WTC11 (cell line): ENCODE measurements at regions of chr15 and their contacts with region 1.

Region 1: DNA sequence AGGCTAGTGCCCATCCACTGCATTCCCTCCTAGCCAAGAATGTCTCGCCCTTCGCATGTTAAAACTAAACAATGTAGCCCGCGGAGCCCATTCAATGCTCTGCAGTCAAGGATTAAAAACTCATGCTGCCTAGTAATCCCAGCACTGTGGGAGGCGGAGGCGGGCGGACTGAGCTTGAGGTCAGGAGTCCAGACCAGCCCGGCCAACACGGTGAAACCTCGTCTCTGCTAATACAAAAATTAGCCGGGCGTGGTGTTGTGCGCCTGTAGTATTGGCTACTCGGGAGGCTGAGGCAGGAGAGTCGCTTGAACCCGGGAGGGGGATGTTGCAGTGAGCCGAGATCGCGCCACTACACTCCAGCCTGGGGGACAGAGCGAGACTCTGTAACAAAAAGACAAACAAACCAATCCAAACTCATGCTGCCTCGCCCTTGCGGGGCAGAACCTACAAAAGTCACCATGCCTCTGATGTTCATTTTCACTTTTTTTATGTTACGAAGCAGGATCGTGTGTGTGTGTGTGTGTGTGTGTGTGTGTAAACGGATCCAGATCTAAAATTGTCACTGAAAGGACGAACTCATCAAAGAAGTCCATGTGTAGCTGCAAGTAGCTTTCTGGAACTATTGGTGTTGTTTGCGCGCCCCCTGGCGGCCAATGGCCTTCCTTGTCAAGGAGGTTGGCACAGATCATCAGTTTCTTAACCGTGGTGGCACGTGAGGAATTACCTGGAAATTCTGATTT is 54.8 kb upstream of the SPESP1 start:
- DNase-seq: peak; percentile 96
- ATAC-seq: peak; percentile 87
- H3K4me3 Mint-ChIP-seq: peak overlapping the region; percentile 76
- H3K27ac Mint-ChIP-seq: no peak overlapping the region
- H3K4me1 Mint-ChIP-seq: peaks cover 9% of the 10 kb centered on the region
- H3K27me3 Mint-ChIP-seq: peaks cover 19% of the 10 kb centered on the region
- CTCF ChIP-seq: peak; percentile 84

Region 2: GRCh38 chr15:68559345-68560310 is 315.9 kb before region 1 on chr15:
- CTCF ChIA-PET with region 1: interaction called, 27 read pairs
- POLR2A ChIA-PET with region 1: no interaction called
- DNase-seq: peak; percentile 89
- ATAC-seq: peak; percentile 85
- H3K4me3 Mint-ChIP-seq: peak overlapping the region; percentile 94
- H3K27ac Mint-ChIP-seq: peak overlapping the region; percentile 72
- H3K4me1 Mint-ChIP-seq: peaks cover 29% of the 10 kb centered on the region
- H3K27me3 Mint-ChIP-seq: peaks cover 20% of the 10 kb centered on the region
- CTCF ChIP-seq: peak; percentile 91

Region 3: DNA sequence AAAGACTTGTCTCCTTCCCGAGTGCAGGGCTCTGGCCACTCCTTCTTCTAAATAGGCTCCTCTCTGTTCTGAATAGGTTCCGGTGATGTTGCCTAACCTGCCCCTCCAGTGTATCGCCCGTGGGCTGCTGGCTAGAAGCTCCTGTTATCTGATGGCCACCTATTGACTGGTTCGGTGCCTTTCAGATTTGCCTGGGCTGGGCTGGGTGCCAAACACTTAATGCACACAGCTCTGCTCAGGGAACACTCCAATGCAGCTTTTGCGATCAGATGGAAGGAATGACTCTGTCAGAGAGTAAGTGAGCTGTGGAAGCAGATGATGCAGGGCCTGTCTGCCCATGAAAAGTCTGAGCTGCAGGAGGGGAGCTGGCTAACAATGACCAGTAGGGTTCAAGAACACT is 183.8 kb before region 1 on chr15:
- CTCF ChIA-PET with region 1: interaction called, 14 read pairs
- POLR2A ChIA-PET with region 1: no interaction called
- DNase-seq: no peak
- ATAC-seq: peak; percentile 69
- H3K4me3 Mint-ChIP-seq: no peak overlapping the region
- H3K27ac Mint-ChIP-seq: no peak overlapping the region
- H3K4me1 Mint-ChIP-seq: peaks cover 20% of the 10 kb centered on the region
- H3K27me3 Mint-ChIP-seq: peaks cover 5% of the 10 kb centered on the region
- CTCF ChIP-seq: no peak

Region 4: GRCh38 chr15:68776477-68777144 is 98.9 kb before region 1 on chr15:
- CTCF ChIA-PET with region 1: interaction called, 72 read pairs
- POLR2A ChIA-PET with region 1: no interaction called
- DNase-seq: no peak
- ATAC-seq: peak; percentile 55
- H3K4me3 Mint-ChIP-seq: no peak overlapping the region
- H3K27ac Mint-ChIP-seq: no peak overlapping the region; the same call in 1 of the 2 replicates
- H3K4me1 Mint-ChIP-seq: peaks cover 12% of the 10 kb centered on the region
- H3K27me3 Mint-ChIP-seq: peaks cover 11% of the 10 kb centered on the region; the same call in 1 of the 2 replicates
- CTCF ChIP-seq: no peak

Region 5: GRCh38 chr15:68812597-68813548 is 62.7 kb before region 1 on chr15:
- CTCF ChIA-PET with region 1: interaction called, 19 read pairs
- POLR2A ChIA-PET with region 1: interaction called, 4 read pairs
- DNase-seq: no peak
- ATAC-seq: no peak
- H3K4me3 Mint-ChIP-seq: no peak overlapping the region
- H3K27ac Mint-ChIP-seq: peak overlapping the region; percentile 68
- H3K4me1 Mint-ChIP-seq: peaks cover 81% of the 10 kb centered on the region
- H3K27me3 Mint-ChIP-seq: no peaks in the 10 kb centered on the region; the same call in 1 of the 2 replicates
- CTCF ChIP-seq: no peak

Region 6: DNA sequence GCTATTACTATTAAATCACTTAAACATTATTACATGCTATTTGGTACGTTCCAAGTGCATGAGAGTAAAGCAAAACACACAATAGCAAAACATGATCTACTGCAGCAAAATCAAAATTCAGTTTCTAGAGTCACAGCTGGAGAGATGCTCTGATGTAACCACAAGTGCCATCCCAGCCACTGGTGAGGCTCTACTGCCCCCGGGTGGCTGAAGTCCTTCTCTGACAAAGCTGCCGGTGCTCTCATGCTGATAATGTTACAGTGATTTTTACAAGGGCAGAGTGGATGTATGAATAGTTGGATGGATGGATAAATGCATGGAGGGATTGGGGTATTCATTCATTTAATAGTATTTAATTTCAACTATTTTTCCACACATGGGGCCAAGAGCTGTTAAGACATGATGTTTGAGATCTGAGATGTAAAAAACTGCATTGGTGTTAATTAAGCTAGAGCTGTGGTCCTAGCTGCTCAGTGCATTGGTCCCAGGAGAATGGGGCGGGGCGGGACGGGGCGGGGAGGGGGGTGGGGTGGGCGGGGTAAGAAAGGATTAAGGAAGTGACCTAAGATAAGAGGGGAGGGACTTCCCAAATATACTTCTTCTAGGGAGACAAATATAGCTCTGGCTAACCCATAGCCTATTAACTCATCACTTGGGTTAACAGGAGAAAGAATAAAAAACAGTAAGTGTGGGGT is 49.5 kb after region 1 on chr15:
- CTCF ChIA-PET with region 1: interaction called, 104 read pairs
- POLR2A ChIA-PET with region 1: no interaction called
- DNase-seq: peak; percentile 88
- ATAC-seq: peak; percentile 96
- H3K4me3 Mint-ChIP-seq: no peak overlapping the region
- H3K27ac Mint-ChIP-seq: peak overlapping the region; percentile 1
- H3K4me1 Mint-ChIP-seq: peaks cover 5% of the 10 kb centered on the region; the same call in 1 of the 2 replicates
- H3K27me3 Mint-ChIP-seq: peaks cover 8% of the 10 kb centered on the region
- CTCF ChIP-seq: peak; percentile 72